K562 (cell line): ENCODE measurements at regions of chr7 and their contacts with region 1.

Region 1: GRCh38 chr7:43058271-43059066 is 54.0 kb upstream of the HECW1 start:
- DNase-seq: peak in 2 of 4 experiments; percentile 28 to 34
- ATAC-seq: peak; percentile 82
- H3K4me3 ChIP-seq: peak overlapping the region; percentile 46
- H3K27ac ChIP-seq: peak overlapping the region; percentile 93
- H3K4me1 ChIP-seq: peaks cover 7 to 10% of the 10 kb centered on the region in 2 experiments; a peak in 4 of 5 replicates
- H3K27me3 ChIP-seq: no peaks in the 10 kb centered on the region
- CTCF ChIP-seq: no peak
- EP300 ChIP-seq: no peak
- POLR2A ChIP-seq: no peak
- RAD21 ChIP-seq: no peak

Region 2: GRCh38 chr7:42986781-42987248 is 71.7 kb before region 1 on chr7:
- CTCF ChIA-PET with region 1: no interaction called
- POLR2A ChIA-PET with region 1: no interaction called
- in situ Hi-C with region 1: no loop called
- intact Hi-C with region 1: loop called (anchors 2 kb)
- DNase-seq: peak; percentile 76 to 90 (median 82)
- ATAC-seq: peak; percentile 97
- H3K4me3 ChIP-seq: no peak overlapping the region
- H3K27ac ChIP-seq: peak overlapping the region; percentile 66
- H3K4me1 ChIP-seq: peaks cover 5 to 29% of the 10 kb centered on the region in 2 experiments
- H3K27me3 ChIP-seq: no peaks in the 10 kb centered on the region
- CTCF ChIP-seq: no peak
- EP300 ChIP-seq: peak; percentile 97
- POLR2A ChIP-seq: no peak
- RAD21 ChIP-seq: no peak

Region 3: GRCh38 chr7:43034535-43035002 is 23.9 kb before region 1 on chr7:
- CTCF ChIA-PET with region 1: no interaction called
- POLR2A ChIA-PET with region 1: interaction called, 3 read pairs
- in situ Hi-C with region 1: no loop called
- intact Hi-C with region 1: loop called (anchors 2 kb)
- DNase-seq: peak; percentile 40 to 90 (median 66)
- ATAC-seq: peak; percentile 89
- H3K4me3 ChIP-seq: no peak overlapping the region
- H3K27ac ChIP-seq: peak overlapping the region; percentile 59
- H3K4me1 ChIP-seq: peaks cover 4 to 22% of the 10 kb centered on the region in 2 experiments; a peak in 3 of 5 replicates
- H3K27me3 ChIP-seq: no peaks in the 10 kb centered on the region
- CTCF ChIP-seq: no peak
- EP300 ChIP-seq: peak; percentile 87; the same call in 1 of the 2 replicates
- POLR2A ChIP-seq: peak; percentile 25; the same call in 1 of the 2 replicates
- RAD21 ChIP-seq: no peak; a peak in 1 of 4 replicates

Region 4: DNA sequence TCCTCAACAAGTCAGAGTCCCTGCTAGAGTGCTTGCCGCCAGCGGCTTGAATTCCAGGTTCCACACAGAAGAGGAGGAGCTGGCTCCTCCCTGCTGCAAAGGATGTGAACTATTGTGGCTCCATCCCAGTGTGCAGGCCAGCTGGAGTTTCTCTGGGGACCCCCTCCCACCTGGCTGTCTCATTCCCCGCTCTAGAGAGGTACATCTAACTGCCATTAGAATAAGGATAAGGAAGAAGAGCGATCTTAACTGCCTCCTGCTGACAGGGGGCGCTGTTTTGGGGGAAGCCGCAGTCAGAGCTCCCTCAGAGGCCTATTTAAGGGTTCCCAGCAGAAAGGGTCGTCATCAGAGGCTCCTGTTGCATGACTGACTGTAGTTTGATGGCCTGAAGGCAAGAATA is 13.1 kb after region 1 on chr7:
- CTCF ChIA-PET with region 1: no interaction called
- POLR2A ChIA-PET with region 1: interaction called, 10 read pairs
- in situ Hi-C with region 1: no loop called
- intact Hi-C with region 1: no loop called
- DNase-seq: peak; percentile 20 to 78 (median 28)
- ATAC-seq: peak; percentile 89
- H3K4me3 ChIP-seq: no peak overlapping the region
- H3K27ac ChIP-seq: peak overlapping the region; percentile 65; the same call in 1 of the 3 replicates
- H3K4me1 ChIP-seq: peaks cover 0 to 11% of the 10 kb centered on the region in 2 experiments; a peak in 3 of 5 replicates
- H3K27me3 ChIP-seq: no peaks in the 10 kb centered on the region
- CTCF ChIP-seq: peak; percentile 63 to 84 (median 69)
- EP300 ChIP-seq: no peak
- POLR2A ChIP-seq: no peak
- RAD21 ChIP-seq: peak in 1 of 2 experiments; percentile 61; a peak in 3 of 4 replicates

Region 5: DNA sequence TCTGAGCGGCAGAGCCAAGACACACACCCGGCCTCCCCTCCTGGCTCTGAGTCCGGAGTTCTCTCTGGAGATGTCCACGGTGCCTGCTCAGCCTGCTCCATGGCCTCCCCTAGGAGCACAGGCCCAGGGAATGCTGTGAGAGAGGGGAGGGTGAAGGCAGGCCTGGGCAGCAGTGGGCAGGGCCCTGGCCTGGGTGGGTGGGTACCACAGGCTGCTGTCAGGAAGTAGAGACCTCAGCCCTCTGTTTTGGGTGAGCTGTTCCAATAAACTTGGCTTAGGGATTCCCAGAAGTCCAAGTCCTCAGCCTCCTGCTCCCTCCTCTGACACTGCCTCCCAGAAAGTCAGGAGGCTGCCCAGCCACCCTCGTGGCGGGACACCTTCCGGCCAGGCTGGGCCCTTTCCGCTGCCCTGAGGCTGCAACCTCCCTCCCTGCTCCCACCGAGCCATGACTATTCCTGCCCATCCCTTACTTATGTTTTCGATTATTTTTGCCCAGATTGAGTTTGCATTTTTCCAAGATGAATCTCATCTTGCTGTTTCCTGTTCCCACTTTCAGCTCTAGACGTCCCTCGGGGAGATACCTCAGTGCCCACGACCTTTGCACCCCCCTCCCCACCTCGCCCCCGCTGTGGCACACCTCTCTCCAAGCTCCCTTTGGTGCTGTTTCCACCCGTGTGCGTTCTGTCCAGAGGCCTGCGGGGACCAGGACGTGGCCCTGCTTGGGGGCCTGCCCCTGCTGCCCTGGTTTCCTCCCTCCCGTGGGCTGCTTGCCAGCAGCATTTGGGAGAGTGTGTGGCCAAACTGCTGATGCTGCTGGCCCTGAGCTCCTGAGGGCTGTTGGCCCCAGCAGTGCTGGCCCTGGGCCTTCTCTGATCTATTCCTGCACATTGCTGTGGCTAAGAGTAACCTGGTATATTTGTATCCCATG is 1029.7 kb after region 1 on chr7:
- CTCF ChIA-PET with region 1: no interaction called
- POLR2A ChIA-PET with region 1: no interaction called
- in situ Hi-C with region 1: no loop called
- intact Hi-C with region 1: no loop called
- DNase-seq: no peak
- ATAC-seq: 0 out of 3 replicates have a peak, but pooled peaks have one; percentile 16
- H3K4me3 ChIP-seq: no peak overlapping the region
- H3K27ac ChIP-seq: no peak overlapping the region
- H3K4me1 ChIP-seq: peaks cover 0 to 9% of the 10 kb centered on the region in 2 experiments; a peak in 3 of 5 replicates
- H3K27me3 ChIP-seq: no peaks in the 10 kb centered on the region
- CTCF ChIP-seq: no peak
- EP300 ChIP-seq: no peak
- POLR2A ChIP-seq: no peak
- RAD21 ChIP-seq: no peak